ENCODE measurements at regions of chr18 and their contacts with region 1.

Region 1: GRCh38 chr18:57446322-57446721 is 11.1 kb downstream of the ONECUT2 start:
- DNase-seq: no peak
- ATAC-seq: peak; percentile 93
- H3K4me3 ChIP-seq: no peak overlapping the region
- H3K27ac ChIP-seq: no peak overlapping the region
- H3K4me1 ChIP-seq: no peaks in the 10 kb centered on the region
- H3K27me3 ChIP-seq: no peaks in the 10 kb centered on the region
- CTCF ChIP-seq: peak; percentile 38 to 82 (median 81); a peak in 5 of 6 replicates
- POLR2A ChIP-seq: no peak
- RAD21 ChIP-seq: peak; percentile 70

Region 2: DNA sequence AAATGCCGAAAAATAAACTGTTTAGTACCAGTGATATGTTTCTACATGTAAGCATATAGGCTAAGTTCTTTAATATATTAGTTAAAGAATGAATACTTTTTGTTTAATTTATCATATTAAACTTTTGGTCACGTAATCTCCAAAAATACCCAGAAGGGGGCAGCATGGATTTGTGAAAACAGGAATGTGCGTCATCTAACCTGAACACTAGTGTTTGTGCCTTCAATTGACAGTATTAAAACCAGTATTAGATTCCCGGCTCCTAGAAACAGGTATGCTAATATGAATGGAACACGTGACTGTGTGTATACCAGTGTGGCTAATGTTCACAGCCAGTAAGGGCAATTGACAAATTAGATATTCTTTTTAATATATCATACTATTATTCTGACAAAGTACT is 743.4 kb before region 1 on chr18:
- CTCF ChIA-PET with region 1: no interaction called
- POLR2A ChIA-PET with region 1: no interaction called
- RAD21 ChIA-PET with region 1: no interaction called
- intact Hi-C with region 1: loop called (anchors 2 kb)
- DNase-seq: peak; percentile 58
- ATAC-seq: peak; percentile 87
- H3K4me3 ChIP-seq: no peak overlapping the region
- H3K27ac ChIP-seq: no peak overlapping the region
- H3K4me1 ChIP-seq: peaks cover 0 to 4% of the 10 kb centered on the region in 2 experiments; a peak in 1 of 4 replicates
- H3K27me3 ChIP-seq: no peaks in the 10 kb centered on the region
- CTCF ChIP-seq: peak; percentile 46 to 50 (median 49); a peak in 4 of 6 replicates
- POLR2A ChIP-seq: no peak
- RAD21 ChIP-seq: peak; percentile 59

Region 3: DNA sequence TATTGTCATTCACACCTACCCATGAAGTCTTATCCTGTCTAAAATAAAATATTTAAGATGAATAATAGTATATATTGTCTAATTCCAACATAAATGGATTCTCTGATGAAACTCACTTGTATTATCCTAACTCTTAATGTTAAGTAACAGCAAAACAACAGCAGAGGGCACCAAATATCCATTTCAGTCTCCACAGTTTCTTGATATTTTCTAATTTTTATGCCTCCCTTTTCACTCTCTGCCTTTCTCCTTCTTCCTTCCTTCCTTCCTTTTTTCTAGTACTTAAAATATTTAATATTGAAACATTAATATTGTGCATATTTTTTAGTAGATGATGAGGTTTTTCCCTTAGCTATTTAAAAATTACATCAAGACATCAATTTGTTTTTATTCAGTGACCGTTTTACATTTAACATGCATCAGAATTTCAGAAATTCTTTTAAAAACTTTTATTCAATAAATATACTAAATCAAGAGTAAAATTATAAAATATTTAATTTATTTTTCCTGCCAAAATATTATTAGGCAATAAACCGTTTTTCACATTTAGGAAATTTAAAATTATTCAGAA is 697.5 kb before region 1 on chr18:
- CTCF ChIA-PET with region 1: interaction called, 3 read pairs
- POLR2A ChIA-PET with region 1: no interaction called
- RAD21 ChIA-PET with region 1: no interaction called
- intact Hi-C with region 1: loop called (anchors 1 kb)
- DNase-seq: peak; percentile 12
- ATAC-seq: no peak
- H3K4me3 ChIP-seq: no peak overlapping the region
- H3K27ac ChIP-seq: no peak overlapping the region
- H3K4me1 ChIP-seq: no peaks in the 10 kb centered on the region
- H3K27me3 ChIP-seq: no peaks in the 10 kb centered on the region
- CTCF ChIP-seq: peak; percentile 33 to 53 (median 51); a peak in 5 of 6 replicates
- POLR2A ChIP-seq: no peak
- RAD21 ChIP-seq: peak; percentile 76

Region 4: GRCh38 chr18:56789004-56789888 is 657.1 kb before region 1 on chr18:
- CTCF ChIA-PET with region 1: no interaction called
- POLR2A ChIA-PET with region 1: no interaction called
- RAD21 ChIA-PET with region 1: no interaction called
- intact Hi-C with region 1: loop called (anchors 1 kb)
- DNase-seq: peak; percentile 23
- ATAC-seq: peak; percentile 78
- H3K4me3 ChIP-seq: no peak overlapping the region
- H3K27ac ChIP-seq: no peak overlapping the region
- H3K4me1 ChIP-seq: no peaks in the 10 kb centered on the region
- H3K27me3 ChIP-seq: no peaks in the 10 kb centered on the region
- CTCF ChIP-seq: peak; percentile 18 to 78 (median 71); a peak in 5 of 6 replicates
- POLR2A ChIP-seq: no peak
- RAD21 ChIP-seq: peak; percentile 55

Region 5: GRCh38 chr18:57320603-57321002 is 125.7 kb before region 1 on chr18:
- CTCF ChIA-PET with region 1: no interaction called
- POLR2A ChIA-PET with region 1: no interaction called
- RAD21 ChIA-PET with region 1: no interaction called
- intact Hi-C with region 1: no loop called
- DNase-seq: no peak
- ATAC-seq: no peak
- H3K4me3 ChIP-seq: no peak overlapping the region
- H3K27ac ChIP-seq: no peak overlapping the region
- H3K4me1 ChIP-seq: no peaks in the 10 kb centered on the region
- H3K27me3 ChIP-seq: peaks cover 39% of the 10 kb centered on the region
- CTCF ChIP-seq: no peak
- POLR2A ChIP-seq: no peak
- RAD21 ChIP-seq: no peak

Measured in HCT116 (cell line).